Gastrocnemius medialis (tissue), 4 donors: ENCODE measurements at regions of chr3 and their contacts with region 1.

Region 1: GRCh38 chr3:97778152-97778551 is 13.6 kb downstream of the ARL6 start:
- DNase-seq: no peak
- ATAC-seq: no peak
- H3K4me3 ChIP-seq: no peak overlapping the region
- H3K27ac ChIP-seq: no peak overlapping the region
- H3K4me1 ChIP-seq: no peaks in the 10 kb centered on the region
- H3K27me3 ChIP-seq: no peaks in the 10 kb centered on the region
- CTCF ChIP-seq: no peak
- POLR2A ChIP-seq: no peak

Region 2: GRCh38 chr3:97384581-97384980 is 393.6 kb before region 1 on chr3:
- in situ Hi-C with region 1: no loop called
- intact Hi-C with region 1: no loop called
- DNase-seq: no peak
- ATAC-seq: no peak
- H3K4me3 ChIP-seq: no peak overlapping the region
- H3K27ac ChIP-seq: no peak overlapping the region
- H3K4me1 ChIP-seq: no peaks in the 10 kb centered on the region
- H3K27me3 ChIP-seq: no peaks in the 10 kb centered on the region
- CTCF ChIP-seq: no peak
- POLR2A ChIP-seq: no peak

Region 3: DNA sequence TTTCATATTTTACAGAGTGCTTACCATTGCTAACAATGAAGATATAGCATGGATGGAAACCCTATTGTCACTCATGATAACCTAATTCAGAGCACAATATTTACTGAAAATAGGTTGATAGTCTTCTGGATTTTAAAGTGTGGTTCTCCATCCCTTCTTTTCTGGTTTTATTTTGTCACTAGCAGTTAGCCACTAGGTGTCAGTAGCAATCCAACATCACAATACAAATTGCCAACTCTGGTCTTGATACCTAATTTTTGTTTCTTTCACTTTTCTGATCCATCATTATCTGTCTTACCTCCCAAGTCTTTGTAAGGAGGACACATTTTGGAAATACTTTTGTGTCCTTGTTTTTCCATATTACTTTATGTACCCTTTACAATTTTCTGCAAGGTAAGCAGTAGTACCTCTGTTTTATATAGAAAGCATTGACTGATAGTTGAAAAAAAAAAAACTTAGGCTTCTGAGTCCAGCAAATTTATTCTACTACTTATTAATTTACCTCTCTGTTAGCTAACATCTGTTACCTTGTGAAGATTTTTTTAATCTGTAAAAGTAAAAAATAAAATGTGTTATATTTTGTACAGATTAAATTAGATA is 15.4 kb after region 1 on chr3:
- in situ Hi-C with region 1: no loop called
- intact Hi-C with region 1: loop called (anchors 1 kb)
- DNase-seq: no peak
- ATAC-seq: no peak
- H3K4me3 ChIP-seq: no peak overlapping the region
- H3K27ac ChIP-seq: no peak overlapping the region
- H3K4me1 ChIP-seq: peaks cover 0 to 3% of the 10 kb centered on the region in 2 donors
- H3K27me3 ChIP-seq: no peaks in the 10 kb centered on the region
- CTCF ChIP-seq: peak; percentile 69 to 82 (median 76)
- POLR2A ChIP-seq: no peak